ENCODE measurements at regions of chr12 and their contacts with region 1.

Region 1: DNA sequence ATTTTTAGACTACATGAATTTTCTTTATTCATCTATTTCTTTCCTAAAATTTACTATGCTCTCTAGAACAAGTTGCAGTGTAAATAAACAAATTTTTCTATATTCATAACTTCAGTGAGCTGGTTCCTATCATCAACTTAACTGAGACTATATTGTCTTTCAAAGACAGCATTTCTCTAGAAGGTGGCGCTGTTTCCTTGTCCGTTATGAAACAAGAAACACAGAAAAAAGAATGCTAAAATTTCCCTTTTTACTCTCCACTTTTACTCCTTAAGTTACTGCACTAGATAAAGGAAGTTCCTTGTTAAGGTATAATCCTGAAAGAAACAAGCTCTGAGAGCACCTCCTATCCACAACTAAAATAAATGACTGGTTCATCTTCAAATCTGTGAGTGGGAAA is 8.2 kb upstream of the CLEC2A start:
- DNase-seq: peak; percentile 28
- H3K4me3 Mint-ChIP-seq: no peak overlapping the region
- H3K27ac Mint-ChIP-seq: no peak overlapping the region
- H3K4me1 Mint-ChIP-seq: peaks cover 23% of the 10 kb centered on the region
- H3K27me3 Mint-ChIP-seq: no peaks in the 10 kb centered on the region

Region 2: GRCh38 chr12:9906873-9907272 is 33.5 kb before region 1 on chr12:
- CTCF ChIA-PET with region 1: interaction called, 3 read pairs
- intact Hi-C with region 1: loop called (anchors 2 kb)
- DNase-seq: peak; percentile 49
- H3K4me3 Mint-ChIP-seq: no peak overlapping the region
- H3K27ac Mint-ChIP-seq: peak overlapping the region; percentile 68
- H3K4me1 Mint-ChIP-seq: peaks cover 21% of the 10 kb centered on the region
- H3K27me3 Mint-ChIP-seq: no peaks in the 10 kb centered on the region

Region 3: GRCh38 chr12:10012630-10013330 is 72.4 kb after region 1 on chr12:
- CTCF ChIA-PET with region 1: interaction called, 15 read pairs
- intact Hi-C with region 1: loop called (anchors 1 kb)
- DNase-seq: no peak
- H3K4me3 Mint-ChIP-seq: no peak overlapping the region
- H3K27ac Mint-ChIP-seq: no peak overlapping the region
- H3K4me1 Mint-ChIP-seq: no peaks in the 10 kb centered on the region
- H3K27me3 Mint-ChIP-seq: peaks cover 6% of the 10 kb centered on the region

Region 4: DNA sequence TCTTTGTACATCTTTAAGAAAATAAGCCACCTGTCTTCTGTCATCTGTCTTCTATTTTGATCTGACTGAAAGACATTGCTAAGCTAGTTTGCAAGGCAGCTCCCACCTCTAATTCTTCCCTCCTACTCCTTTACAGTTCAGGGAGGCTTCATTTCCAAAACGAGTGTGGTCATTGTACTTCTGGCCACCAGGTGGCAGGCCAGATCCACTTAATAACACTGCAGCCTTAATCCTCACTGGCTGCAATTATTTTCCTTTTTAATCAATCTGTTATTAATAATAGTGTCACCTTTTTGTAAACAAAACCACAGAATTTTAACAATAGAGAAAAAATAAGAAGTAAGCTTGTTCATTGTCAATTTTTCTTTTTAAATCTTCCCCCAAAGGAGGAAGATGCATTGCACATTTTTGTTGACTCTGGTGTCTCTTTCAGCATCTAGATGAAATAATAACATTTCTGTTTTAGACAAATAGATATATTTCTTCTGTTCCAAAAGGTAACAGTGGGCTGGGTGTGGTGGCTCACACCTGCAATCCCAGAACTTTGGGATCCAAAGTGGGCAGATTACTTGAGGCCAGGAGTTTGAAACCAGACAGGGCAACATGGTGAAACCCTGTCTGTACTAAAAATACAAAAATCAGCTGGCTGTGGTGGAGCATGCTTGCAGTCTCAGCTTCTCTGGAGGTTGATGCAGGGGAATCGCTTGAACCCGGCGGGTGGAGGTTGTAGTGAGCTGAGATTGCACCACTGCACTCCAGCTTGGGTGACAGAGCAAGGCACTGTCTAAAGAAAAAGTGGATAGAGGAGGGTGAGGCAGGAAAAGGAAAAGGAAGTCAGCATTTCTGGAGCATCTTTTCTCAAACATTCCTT is 295.6 kb after region 1 on chr12:
- CTCF ChIA-PET with region 1: no interaction called
- intact Hi-C with region 1: no loop called
- DNase-seq: peak; percentile 43
- H3K4me3 Mint-ChIP-seq: no peak overlapping the region
- H3K27ac Mint-ChIP-seq: no peak overlapping the region
- H3K4me1 Mint-ChIP-seq: no peaks in the 10 kb centered on the region
- H3K27me3 Mint-ChIP-seq: no peaks in the 10 kb centered on the region

Region 5: DNA sequence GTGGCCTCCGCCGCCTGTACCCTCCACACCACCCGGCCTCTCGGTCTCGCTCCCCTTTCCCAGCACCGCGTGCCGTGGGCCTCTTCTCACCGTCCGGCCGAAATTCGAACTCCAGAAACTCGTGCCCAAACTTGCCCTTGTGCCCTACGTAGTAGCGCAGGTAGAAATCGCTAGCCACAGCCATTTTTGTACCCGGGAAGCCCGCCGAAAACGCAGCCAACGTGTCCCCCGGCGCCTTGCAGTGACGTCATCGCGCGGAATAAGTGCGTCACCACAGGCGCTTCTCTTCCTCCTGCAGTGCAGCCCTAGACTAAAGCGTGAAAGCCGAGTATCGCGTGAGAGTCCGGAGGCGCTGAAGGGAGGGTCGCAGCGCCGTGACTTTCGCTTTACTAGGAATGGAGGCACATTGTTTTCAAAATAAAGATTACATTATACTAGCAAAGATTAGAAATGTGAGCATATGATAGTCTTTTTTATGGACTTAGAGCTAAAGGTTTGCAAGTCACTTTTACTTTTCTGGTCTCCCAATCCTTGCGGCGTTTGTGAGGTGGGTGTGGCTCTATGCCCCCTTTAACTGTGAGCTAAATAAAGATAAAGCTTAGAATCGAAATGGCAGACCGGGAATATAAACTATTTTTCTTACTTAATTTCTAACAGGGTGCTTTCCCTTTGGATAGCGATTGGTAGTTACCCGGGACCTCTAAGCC is 673.1 kb after region 1 on chr12 and contains the start of gene MAGOHB:
- CTCF ChIA-PET with region 1: no interaction called
- intact Hi-C with region 1: loop called (anchors 10 kb)
- DNase-seq: peak; percentile 99
- H3K4me3 Mint-ChIP-seq: peak within 1 kb of the TSS; percentile 99
- H3K27ac Mint-ChIP-seq: peak within 1 kb of the TSS; percentile 99
- H3K4me1 Mint-ChIP-seq: peaks cover 30% of the 10 kb centered on the region
- H3K27me3 Mint-ChIP-seq: peaks cover 2% of the 10 kb centered on the region
- total RNA-seq, gene MAGOHB: 58.8 to 61.1 TPM